Adrenal gland (tissue), 19 donors: ENCODE measurements at regions of chr9 and their contacts with region 1.

Region 1: DNA sequence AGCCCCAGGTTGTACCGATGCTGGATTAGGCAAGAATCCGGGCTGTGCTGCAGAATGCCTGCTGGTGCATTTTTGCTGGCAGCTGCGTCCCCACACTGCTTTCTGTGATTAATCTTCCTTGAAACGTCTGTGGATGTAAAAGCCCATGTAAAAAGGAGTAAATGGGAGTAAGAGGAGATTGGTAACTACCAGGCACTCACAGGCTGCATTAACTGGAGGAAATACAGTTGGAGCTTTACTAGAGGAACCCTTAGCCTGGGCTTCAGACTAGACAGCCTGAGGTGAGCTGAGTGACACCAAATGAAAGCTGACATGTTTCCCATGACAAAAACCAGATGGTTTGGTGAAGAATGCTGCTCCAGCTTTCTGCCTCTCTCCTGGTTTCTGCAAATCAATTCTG is 190.4 kb upstream of the GAS1 start:
- DNase-seq: no peak
- H3K4me3 ChIP-seq: no peak overlapping the region
- H3K27ac ChIP-seq: no peak overlapping the region
- H3K4me1 ChIP-seq: no peaks in the 10 kb centered on the region
- H3K27me3 ChIP-seq: no peaks in the 10 kb centered on the region
- CTCF ChIP-seq: no peak
- POLR2A ChIP-seq: no peak

Region 2: DNA sequence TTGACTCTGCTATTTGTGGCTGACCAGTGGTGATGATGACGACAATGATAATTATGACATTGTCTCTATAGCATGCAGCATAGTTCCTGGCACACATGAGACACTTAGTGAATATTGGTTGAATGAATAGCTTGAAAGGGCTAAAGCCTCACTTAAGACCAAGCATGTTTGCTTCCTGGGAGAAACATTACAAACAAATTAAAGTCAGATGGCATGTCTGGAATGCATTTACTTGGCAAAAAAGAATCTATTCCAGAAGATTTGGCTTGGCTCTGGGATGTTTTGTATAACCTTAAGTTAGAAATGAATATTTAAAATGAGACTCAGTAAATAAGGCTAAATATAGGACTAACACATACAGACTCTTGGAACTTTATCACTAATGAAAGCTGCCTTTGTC is 212.0 kb before region 1 on chr9:
- intact Hi-C with region 1: no loop called
- DNase-seq: no peak
- H3K4me3 ChIP-seq: no peak overlapping the region
- H3K27ac ChIP-seq: no peak overlapping the region
- H3K4me1 ChIP-seq: no peaks in the 10 kb centered on the region
- H3K27me3 ChIP-seq: no peaks in the 10 kb centered on the region
- CTCF ChIP-seq: no peak
- POLR2A ChIP-seq: no peak

Region 3: GRCh38 chr9:87080512-87081264 is 57.0 kb before region 1 on chr9:
- intact Hi-C with region 1: loop called in 1 of 2 experiments (anchors 10 kb)
- DNase-seq: peak in 1 of 7 donors; percentile 4
- H3K4me3 ChIP-seq: no peak overlapping the region
- H3K27ac ChIP-seq: peak overlapping the region in 3 of 5 donors; percentile 15 to 66 (median 37)
- H3K4me1 ChIP-seq: no peaks in the 10 kb centered on the region
- H3K27me3 ChIP-seq: no peaks in the 10 kb centered on the region
- CTCF ChIP-seq: no peak
- POLR2A ChIP-seq: no peak

Region 4: DNA sequence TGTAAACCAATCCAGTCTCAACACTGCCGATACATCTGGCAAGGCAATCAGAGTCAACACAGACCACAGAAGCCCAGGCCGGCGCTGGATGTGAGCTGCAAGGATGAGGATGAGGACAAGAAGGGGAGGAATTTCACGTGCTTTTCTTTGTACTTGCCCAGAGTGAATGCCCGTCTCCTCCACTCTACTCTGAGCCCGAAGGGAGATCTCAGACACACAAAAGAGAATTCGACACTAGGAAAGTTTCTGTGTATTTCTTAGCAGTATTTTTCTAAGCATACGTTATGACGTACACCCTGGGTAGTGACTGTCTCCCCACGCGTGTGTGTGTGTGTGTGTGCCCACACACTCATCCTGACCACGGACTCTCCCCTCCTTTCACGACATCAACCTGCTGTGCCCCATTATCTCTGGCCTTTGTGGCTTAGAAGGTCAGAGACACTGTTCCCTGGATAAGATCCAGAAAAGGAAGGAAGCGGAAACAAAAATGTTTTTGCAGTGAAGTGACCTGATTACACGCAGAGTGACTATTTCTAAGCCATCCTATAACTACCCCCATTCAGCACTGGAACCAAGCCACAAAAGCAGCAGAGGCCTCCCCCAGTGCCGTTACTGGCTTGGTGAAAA is 132.6 kb after region 1 on chr9:
- intact Hi-C with region 1: no loop called
- DNase-seq: peak in 5 of 7 donors; percentile 26 to 50 (median 35)
- H3K4me3 ChIP-seq: peak overlapping the region in 1 of 4 donors; percentile 14
- H3K27ac ChIP-seq: peak overlapping the region in 1 of 5 donors; percentile 13
- H3K4me1 ChIP-seq: peaks cover 0 to 11% of the 10 kb centered on the region in 2 donors
- H3K27me3 ChIP-seq: no peaks in the 10 kb centered on the region
- CTCF ChIP-seq: no peak
- POLR2A ChIP-seq: no peak